Spleen (tissue), 13 donors: ENCODE measurements at regions of chr2 and their contacts with region 1.

Region 1: DNA sequence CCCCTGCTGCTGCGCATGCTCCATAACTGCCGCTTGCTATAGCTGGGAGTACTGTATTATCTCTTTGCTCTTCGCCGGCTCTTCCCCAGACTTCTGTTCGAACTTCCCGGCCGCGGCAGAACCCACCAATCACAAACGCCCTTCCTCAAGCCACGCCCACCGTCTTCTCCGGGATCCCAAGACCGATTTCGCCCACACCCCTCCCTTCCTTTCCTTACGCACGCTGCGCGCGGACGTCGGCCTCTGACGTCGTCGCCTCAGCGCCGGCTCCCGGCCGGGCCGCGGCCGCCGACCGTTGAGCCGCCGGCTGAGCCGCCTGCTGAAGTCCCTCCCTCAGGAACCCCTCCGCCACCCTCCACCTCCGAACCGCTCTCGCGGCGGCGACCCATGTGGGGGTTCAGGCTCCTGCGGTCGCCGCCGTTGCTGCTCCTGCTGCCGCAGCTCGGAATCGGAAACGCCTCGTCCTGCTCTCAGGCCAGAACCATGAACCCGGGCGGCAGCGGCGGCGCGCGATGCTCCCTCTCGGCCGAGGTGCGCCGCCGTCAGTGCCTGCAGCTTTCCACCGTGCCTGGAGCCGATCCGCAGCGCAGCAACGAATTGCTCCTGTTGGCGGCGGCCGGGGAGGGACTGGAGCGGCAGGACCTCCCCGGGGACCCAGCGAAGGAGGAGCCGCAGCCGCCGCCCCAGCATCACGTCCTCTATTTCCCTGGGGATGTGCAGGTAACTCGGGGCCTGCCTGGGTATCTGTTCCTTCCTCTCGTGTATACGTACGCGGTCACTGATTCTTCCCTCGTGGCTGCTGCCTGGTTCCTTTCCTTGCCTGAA is at the start of gene C2orf69:
- DNase-seq: peak; percentile 97
- H3K4me3 ChIP-seq: peak within 1 kb of the TSS; percentile 73 to 95 (median 92)
- H3K27ac ChIP-seq: peak within 1 kb of the TSS; percentile 92 to 98 (median 96)
- H3K4me1 ChIP-seq: peaks cover 20 to 44% (median 37%) of the 10 kb centered on the region in 6 donors
- H3K27me3 ChIP-seq: no peaks in the 10 kb centered on the region
- CTCF ChIP-seq: peak in 1 of 11 experiments; percentile 14
- POLR2A ChIP-seq: no peak
- total RNA-seq, gene C2orf69: 9.6 to 13.3 (median 12.3) TPM

Region 2: DNA sequence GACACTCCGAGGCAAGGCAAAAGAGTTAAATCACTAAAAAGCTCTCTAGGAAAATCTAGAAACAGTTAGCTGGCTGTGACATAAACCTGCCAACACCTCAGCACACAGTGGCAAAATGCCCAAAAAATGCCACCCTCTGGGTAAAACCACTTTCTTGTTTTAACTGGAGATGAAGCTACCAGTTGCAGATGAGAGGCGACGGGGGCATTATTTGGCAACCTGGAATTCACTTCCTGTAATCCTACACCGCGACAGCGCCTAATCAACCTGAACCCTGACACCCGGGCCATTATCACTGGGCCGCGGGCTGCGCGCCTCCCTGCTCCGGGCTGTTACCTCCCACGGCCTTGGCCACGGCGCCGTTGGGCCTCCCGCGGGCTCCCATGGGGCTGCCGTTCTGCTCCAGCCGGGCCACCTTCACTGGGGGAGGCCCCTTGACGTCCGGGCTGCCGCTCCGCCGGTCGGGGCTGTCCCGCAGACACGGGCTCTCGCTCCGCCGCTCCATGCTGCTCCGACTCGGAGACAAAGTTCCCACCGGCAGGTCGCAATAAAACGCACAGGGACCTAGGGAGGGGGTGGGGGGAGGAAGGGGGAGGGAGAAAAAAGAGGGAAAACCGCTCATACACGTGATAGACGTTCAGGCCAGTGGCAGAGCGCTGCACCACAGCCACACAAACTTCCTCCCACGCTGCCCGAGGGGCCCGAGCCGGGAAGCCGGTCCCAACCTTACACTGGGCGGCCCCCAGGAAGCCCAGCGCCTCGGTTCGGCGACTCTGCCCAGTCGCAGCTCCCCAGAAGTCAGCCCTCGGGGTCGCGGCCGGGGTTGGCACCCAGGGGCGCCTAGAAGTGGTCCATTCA is 455.5 kb before region 1 on chr2:
- intact Hi-C with region 1: no loop called
- DNase-seq: peak; percentile 79
- H3K4me3 ChIP-seq: peak overlapping the region in 6 of 8 donors; percentile 3 to 88 (median 11)
- H3K27ac ChIP-seq: no peak overlapping the region
- H3K4me1 ChIP-seq: peaks cover 24 to 49% (median 40%) of the 10 kb centered on the region in 6 donors
- H3K27me3 ChIP-seq: peaks cover 14 to 100% (median 69%) of the 10 kb centered on the region in 7 donors
- CTCF ChIP-seq: no peak
- POLR2A ChIP-seq: no peak

Region 3: DNA sequence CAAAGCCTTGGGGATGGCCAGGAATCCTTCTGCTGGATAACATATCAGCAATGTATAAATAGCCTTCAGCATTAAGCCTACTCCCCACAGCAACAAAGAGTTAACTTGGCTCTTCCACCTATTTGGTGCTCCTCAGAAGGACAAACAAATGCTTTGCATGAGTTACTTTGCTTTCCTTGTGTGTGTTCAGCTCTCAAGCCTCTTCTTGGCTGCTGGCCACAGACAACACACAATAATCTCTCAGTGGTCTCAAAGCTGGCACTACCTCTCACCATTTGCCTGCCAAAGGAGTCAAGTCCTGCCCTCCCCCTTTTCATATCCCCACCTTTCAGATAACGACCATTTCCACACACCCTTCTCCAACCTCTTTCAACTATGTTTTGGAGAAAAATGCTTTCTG is 77.7 kb before region 1 on chr2:
- intact Hi-C with region 1: no loop called
- DNase-seq: no peak
- H3K4me3 ChIP-seq: no peak overlapping the region
- H3K27ac ChIP-seq: no peak overlapping the region
- H3K4me1 ChIP-seq: no peaks in the 10 kb centered on the region
- H3K27me3 ChIP-seq: no peaks in the 10 kb centered on the region
- CTCF ChIP-seq: no peak
- POLR2A ChIP-seq: no peak

Region 4: DNA sequence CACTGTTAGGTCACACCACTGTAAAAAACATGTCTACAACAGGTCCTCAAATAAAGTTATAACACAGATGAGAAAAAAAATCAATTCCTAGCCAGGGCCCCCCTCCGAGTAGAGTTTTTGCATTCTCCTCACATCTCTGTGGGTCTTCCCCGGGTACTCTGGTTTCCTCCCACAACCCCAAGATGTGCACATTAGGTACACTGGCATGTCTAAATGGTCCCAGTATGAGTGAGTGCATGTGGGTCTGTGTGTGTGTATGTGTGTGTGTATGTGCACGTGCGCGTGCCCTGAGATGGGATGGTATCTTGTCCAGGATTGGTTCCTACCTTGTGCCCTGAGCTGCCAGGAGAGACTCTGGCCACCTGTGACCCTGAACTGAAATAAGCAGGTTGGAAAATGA is 39.1 kb after region 1 on chr2:
- intact Hi-C with region 1: loop called (anchors 5 kb)
- DNase-seq: no peak
- H3K4me3 ChIP-seq: no peak overlapping the region
- H3K27ac ChIP-seq: no peak overlapping the region
- H3K4me1 ChIP-seq: peaks cover 20 to 84% (median 45%) of the 10 kb centered on the region in 6 donors
- H3K27me3 ChIP-seq: no peaks in the 10 kb centered on the region
- CTCF ChIP-seq: no peak
- POLR2A ChIP-seq: no peak

Region 5: GRCh38 chr2:200065477-200065876 is 154.2 kb after region 1 on chr2:
- intact Hi-C with region 1: no loop called
- DNase-seq: no peak
- H3K4me3 ChIP-seq: no peak overlapping the region
- H3K27ac ChIP-seq: no peak overlapping the region
- H3K4me1 ChIP-seq: no peaks in the 10 kb centered on the region
- H3K27me3 ChIP-seq: no peaks in the 10 kb centered on the region
- CTCF ChIP-seq: no peak
- POLR2A ChIP-seq: no peak